ENCODE measurements at regions of chr5 and their contacts with region 1.

Region 1: DNA sequence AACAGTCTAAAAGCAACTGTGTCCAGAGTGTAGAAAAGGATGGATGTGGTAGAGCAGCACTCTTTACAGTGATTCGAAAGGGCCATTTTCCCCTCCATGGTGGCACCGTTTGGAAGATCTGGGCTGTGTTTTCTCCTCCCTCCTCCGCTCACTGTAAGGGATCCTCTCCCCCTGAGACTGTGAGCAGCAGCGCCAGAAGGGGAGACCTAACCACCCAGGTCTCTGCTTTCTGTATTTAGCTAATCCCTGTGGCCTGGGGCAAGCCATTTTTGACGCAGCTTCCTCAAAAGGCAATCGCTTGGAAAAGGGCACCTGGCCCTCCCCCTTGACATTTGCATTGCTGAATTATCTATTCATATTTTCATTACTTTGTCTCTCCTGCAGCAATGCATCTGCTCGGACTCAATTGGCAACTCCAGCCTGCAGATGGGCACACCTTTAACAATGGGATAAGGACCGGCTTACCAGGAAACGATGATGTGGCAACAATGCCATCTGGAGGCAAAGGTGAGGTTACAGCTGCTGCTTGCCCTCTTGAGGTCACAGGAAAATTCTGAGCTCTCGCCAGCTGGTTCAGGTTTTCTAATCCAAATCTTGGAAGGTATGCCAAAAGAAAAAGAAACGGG is 244.3 kb upstream of the WWC1 start:
- DNase-seq: no peak
- H3K4me3 Mint-ChIP-seq: no peak overlapping the region
- H3K27ac Mint-ChIP-seq: no peak overlapping the region
- H3K4me1 Mint-ChIP-seq: no peaks in the 10 kb centered on the region
- H3K27me3 Mint-ChIP-seq: no peaks in the 10 kb centered on the region

Region 2: DNA sequence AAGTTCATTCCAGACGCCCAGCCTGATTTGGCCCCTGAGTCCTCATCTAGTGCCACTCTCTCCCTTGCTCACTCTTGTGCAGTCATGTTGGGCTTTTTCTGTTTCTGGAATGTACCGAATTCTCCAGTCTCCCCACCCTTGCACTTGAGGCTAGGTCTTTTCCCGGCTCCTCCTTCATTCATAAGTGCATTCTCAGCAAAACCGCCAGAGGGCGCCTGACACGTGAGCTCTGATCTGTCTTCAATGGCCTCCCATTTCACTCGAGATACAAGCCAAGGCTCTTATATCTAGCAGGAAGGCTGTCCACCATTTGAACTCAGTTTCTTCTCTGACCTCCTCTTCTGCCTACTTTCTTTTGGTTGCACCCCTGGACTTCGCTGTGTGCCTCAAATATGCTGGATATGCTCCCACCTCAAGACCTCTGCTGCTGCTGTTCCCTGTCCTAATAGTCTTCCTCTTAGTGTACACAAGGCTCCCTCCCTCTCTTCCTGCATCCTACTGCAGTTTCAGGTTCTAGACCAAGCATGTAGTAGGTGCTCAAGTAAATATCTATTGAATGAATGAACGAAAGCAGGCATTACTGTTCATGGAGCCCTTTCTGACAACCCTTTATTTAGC is 323.8 kb before region 1 on chr5:
- intact Hi-C with region 1: loop called (anchors 2 kb)
- DNase-seq: peak; percentile 30
- H3K4me3 Mint-ChIP-seq: no peak overlapping the region
- H3K27ac Mint-ChIP-seq: no peak overlapping the region
- H3K4me1 Mint-ChIP-seq: peaks cover 6% of the 10 kb centered on the region
- H3K27me3 Mint-ChIP-seq: no peaks in the 10 kb centered on the region

Region 3: GRCh38 chr5:167886196-167886595 is 161.0 kb before region 1 on chr5:
- intact Hi-C with region 1: no loop called
- DNase-seq: no peak
- H3K4me3 Mint-ChIP-seq: no peak overlapping the region
- H3K27ac Mint-ChIP-seq: no peak overlapping the region
- H3K4me1 Mint-ChIP-seq: no peaks in the 10 kb centered on the region
- H3K27me3 Mint-ChIP-seq: no peaks in the 10 kb centered on the region

Measured in activated T-helper 1 cell treated with anti-CD3 and anti-CD28 coated beads, Interleukin-12 subunit alpha, Interleukin-12 subunit beta, Interleukin-2, Interleukin-4 antibody, amounts not matched to agents 30 ng/mL and 10 ng/mL and 1 ng/mL, durations not matched to agents 14 hours and 24 hours and 36 hours (primary cell).